ENCODE measurements at regions of chr10 and their contacts with region 1.

Region 1: DNA sequence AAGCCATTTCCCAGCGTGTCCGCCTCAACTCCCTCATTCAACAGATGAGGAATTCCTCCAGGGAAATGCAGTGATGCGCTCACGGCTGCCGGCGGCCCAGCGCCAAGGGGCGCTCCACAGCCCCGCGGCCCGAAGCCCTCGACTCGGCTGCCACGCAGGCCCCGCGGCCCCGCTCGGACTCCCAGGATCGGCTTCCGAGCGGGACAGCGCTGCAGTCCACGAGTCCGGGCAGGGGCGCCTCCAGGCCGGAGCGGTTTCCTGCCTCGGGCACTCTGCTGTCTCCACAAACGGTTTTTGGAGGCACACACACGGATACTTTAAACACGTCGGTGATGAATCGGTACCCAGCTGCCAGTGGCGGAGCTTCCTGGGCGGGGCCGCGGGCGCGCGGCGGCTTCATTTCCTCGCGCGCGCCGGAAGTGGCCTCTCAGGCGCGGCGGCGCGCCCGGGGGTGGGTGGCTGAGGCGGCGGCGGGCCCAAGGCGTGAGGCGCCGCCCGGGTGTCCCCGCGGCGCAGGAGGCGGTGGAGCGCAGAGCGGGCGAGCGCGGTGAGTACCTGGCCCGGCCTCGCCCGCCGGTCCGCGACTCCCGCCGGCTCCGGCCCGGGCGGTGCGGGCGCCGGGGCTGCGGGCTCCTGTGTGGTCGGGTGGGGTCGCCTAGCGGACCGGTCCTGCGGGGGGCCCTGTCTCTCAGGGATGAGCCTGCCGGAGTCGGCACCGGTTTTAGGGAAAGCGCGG is at the start of gene CSGALNACT2:
- H3K4me3 Mint-ChIP-seq: peak within 1 kb of the TSS; percentile 97
- H3K27ac Mint-ChIP-seq: peak within 1 kb of the TSS; percentile 90
- H3K4me1 Mint-ChIP-seq: peaks cover 60% of the 10 kb centered on the region
- H3K27me3 Mint-ChIP-seq: no peaks in the 10 kb centered on the region

Region 2: GRCh38 chr10:43120929-43121314 is 17.3 kb before region 1 on chr10:
- intact Hi-C with region 1: loop called (anchors 1 kb)
- H3K4me3 Mint-ChIP-seq: peak overlapping the region; percentile 37
- H3K27ac Mint-ChIP-seq: peak overlapping the region; percentile 96
- H3K4me1 Mint-ChIP-seq: peaks cover 86% of the 10 kb centered on the region
- H3K27me3 Mint-ChIP-seq: peaks cover 3% of the 10 kb centered on the region